H1 (cell line): ENCODE measurements at regions of chr10 and their contacts with region 1.

Region 1: DNA sequence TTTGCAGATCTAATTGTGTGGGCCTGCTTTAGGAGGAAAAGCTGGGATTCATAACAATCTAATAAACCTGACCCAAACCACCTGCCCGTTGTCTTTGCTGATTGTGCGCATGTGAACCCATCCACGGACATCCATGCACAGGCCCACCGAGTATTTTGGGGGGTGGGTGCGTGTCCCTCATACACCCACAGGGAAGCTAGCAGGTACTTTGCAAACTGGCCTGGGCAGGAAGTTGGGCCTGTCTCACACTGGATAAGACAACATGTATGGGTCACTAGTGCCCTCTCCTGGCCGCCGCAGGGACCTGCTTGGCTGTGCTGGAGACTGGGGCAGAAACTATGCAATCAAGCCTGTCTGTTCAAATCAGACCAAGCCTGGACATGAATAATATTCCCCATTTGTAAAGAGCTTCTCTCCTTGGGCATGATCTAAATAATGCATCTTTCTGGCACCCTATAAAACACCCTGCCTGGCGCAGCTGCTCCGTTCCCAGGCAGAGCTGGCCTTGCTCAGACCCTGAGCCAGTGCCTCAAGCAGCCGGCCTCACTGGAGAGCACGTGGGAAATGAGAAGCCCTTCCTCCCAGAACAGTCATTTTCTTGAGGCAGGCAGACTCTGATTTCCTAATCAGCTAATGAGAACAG is 15.8 kb downstream of the ECHDC3 start:
- DNase-seq: peak; percentile 62 to 92
- H3K4me3 ChIP-seq: no peak overlapping the region
- H3K27ac ChIP-seq: no peak overlapping the region
- H3K4me1 ChIP-seq: no peaks in the 10 kb centered on the region; a peak in 1 of 7 replicates
- H3K27me3 ChIP-seq: no peaks in the 10 kb centered on the region
- CTCF ChIP-seq: peak; percentile 92 to 98 (median 93)
- EP300 ChIP-seq: no peak
- POLR2A ChIP-seq: no peak
- RAD21 ChIP-seq: peak; percentile 97 to 98

Region 2: GRCh38 chr10:11515596-11516430 is 242.1 kb before region 1 on chr10:
- CTCF ChIA-PET with region 1: interaction called, 80 read pairs
- POLR2A ChIA-PET with region 1: interaction called, 3 read pairs
- DNase-seq: no peak
- H3K4me3 ChIP-seq: no peak overlapping the region
- H3K27ac ChIP-seq: no peak overlapping the region
- H3K4me1 ChIP-seq: peaks cover 0 to 5% (median 0%) of the 10 kb centered on the region in 4 experiments; a peak in 1 of 7 replicates
- H3K27me3 ChIP-seq: no peaks in the 10 kb centered on the region
- CTCF ChIP-seq: peak in 2 of 3 experiments; percentile 62 to 79; a peak in 3 of 4 replicates
- EP300 ChIP-seq: no peak
- POLR2A ChIP-seq: no peak
- RAD21 ChIP-seq: peak; percentile 90 to 93

Region 3: DNA sequence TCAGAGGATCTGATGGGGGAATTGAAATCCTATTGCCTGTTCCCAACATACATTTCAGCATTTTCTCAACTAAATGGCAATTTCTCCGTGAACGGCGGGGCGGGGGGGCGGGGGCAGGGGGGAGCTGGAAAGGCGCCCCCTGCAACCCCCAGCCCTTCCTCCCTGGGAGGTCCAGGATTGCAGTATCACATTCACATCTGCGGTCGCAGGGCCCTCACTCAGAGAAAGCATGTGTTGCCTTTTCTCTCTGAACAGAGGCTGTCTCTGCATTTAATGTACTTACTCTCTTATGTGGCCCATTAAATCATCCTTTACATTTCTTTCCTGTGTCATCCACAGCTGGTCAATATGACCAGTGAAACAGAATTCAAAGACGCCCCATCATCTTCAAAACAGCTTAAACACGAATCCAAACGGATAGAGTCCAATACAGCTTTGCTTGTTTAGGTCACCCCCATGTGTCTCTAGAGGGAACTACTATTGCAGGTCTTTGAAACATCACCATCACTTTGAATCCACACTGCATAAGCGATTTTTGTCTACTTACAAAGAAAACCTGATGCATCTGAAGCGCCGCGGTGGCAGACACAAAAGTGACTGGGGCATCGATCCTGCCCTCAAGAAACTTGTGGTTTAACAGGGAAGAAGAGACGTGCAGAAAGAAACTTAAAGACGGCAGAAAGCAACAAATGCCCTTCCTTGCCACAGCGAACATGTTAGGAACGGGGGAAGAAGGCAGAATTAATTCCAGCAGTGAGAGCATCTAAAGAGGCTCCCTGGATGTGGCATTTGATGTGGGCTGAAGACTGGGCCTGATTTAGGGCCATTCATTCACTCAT is 32.8 kb before region 1 on chr10:
- CTCF ChIA-PET with region 1: interaction called, 10 read pairs
- POLR2A ChIA-PET with region 1: no interaction called
- DNase-seq: no peak
- H3K4me3 ChIP-seq: no peak overlapping the region
- H3K27ac ChIP-seq: no peak overlapping the region
- H3K4me1 ChIP-seq: no peaks in the 10 kb centered on the region
- H3K27me3 ChIP-seq: no peaks in the 10 kb centered on the region
- CTCF ChIP-seq: peak in 2 of 3 experiments; percentile 59 to 60; a peak in 3 of 4 replicates
- EP300 ChIP-seq: no peak
- POLR2A ChIP-seq: no peak
- RAD21 ChIP-seq: peak; percentile 83

Region 4: GRCh38 chr10:11746883-11747539 is 10.9 kb before region 1 on chr10:
- CTCF ChIA-PET with region 1: interaction called, 20 read pairs
- POLR2A ChIA-PET with region 1: interaction called, 7 read pairs
- DNase-seq: no peak
- H3K4me3 ChIP-seq: no peak overlapping the region
- H3K27ac ChIP-seq: no peak overlapping the region
- H3K4me1 ChIP-seq: peaks cover 0 to 3% (median 0%) of the 10 kb centered on the region in 4 experiments; a peak in 3 of 7 replicates
- H3K27me3 ChIP-seq: no peaks in the 10 kb centered on the region
- CTCF ChIP-seq: no peak
- EP300 ChIP-seq: no peak
- POLR2A ChIP-seq: no peak
- RAD21 ChIP-seq: no peak